B cell (primary cell): ENCODE measurements at regions of chr15 and their contacts with region 1.

Region 1: GRCh38 chr15:63466378-63467192 is 37.8 kb upstream of the USP3 start:
- DNase-seq: peak; percentile 87
- ATAC-seq: peak; percentile 95
- H3K4me3 ChIP-seq: no peak overlapping the region
- H3K4me3 Mint-ChIP-seq: no peak overlapping the region
- H3K27ac ChIP-seq: no peak overlapping the region
- H3K27ac Mint-ChIP-seq: peak overlapping the region; percentile 47
- H3K4me1 ChIP-seq: peaks cover 4 to 8% of the 10 kb centered on the region in 2 donors
- H3K4me1 Mint-ChIP-seq: peaks cover 31% of the 10 kb centered on the region
- H3K27me3 ChIP-seq: no peaks in the 10 kb centered on the region
- H3K27me3 Mint-ChIP-seq: no peaks in the 10 kb centered on the region
- CTCF ChIP-seq: peak; percentile 81

Region 2: GRCh38 chr15:63089260-63090043 is 377.1 kb before region 1 on chr15:
- CTCF ChIA-PET with region 1: no interaction called
- POLR2A ChIA-PET with region 1: no interaction called
- intact Hi-C with region 1: no loop called
- DNase-seq: no peak
- ATAC-seq: no peak
- H3K4me3 ChIP-seq: no peak overlapping the region
- H3K4me3 Mint-ChIP-seq: no peak overlapping the region
- H3K27ac ChIP-seq: no peak overlapping the region
- H3K27ac Mint-ChIP-seq: no peak overlapping the region
- H3K4me1 ChIP-seq: peaks cover 0 to 4% of the 10 kb centered on the region in 2 donors
- H3K4me1 Mint-ChIP-seq: peaks cover 2% of the 10 kb centered on the region
- H3K27me3 ChIP-seq: peaks cover 0 to 2% (median 0%) of the 10 kb centered on the region in 4 experiments
- H3K27me3 Mint-ChIP-seq: no peaks in the 10 kb centered on the region
- CTCF ChIP-seq: no peak

Region 3: GRCh38 chr15:63497642-63498467 is 31.3 kb after region 1 on chr15:
- CTCF ChIA-PET with region 1: interaction called, 148 read pairs
- POLR2A ChIA-PET with region 1: interaction called, 39 read pairs
- intact Hi-C with region 1: no loop called
- DNase-seq: peak; percentile 89
- ATAC-seq: peak; percentile 67
- H3K4me3 ChIP-seq: peak overlapping the region; percentile 6 to 48 (median 21)
- H3K4me3 Mint-ChIP-seq: no peak overlapping the region
- H3K27ac ChIP-seq: peak overlapping the region; percentile 81 to 86
- H3K27ac Mint-ChIP-seq: no peak overlapping the region
- H3K4me1 ChIP-seq: peaks cover 80% of the 10 kb centered on the region in 2 donors
- H3K4me1 Mint-ChIP-seq: peaks cover 65% of the 10 kb centered on the region
- H3K27me3 ChIP-seq: no peaks in the 10 kb centered on the region
- H3K27me3 Mint-ChIP-seq: no peaks in the 10 kb centered on the region
- CTCF ChIP-seq: no peak

Region 4: GRCh38 chr15:63539521-63539920 is 72.9 kb after region 1 on chr15:
- CTCF ChIA-PET with region 1: interaction called, 61 read pairs
- POLR2A ChIA-PET with region 1: no interaction called
- intact Hi-C with region 1: loop called (anchors 2 kb)
- DNase-seq: no peak
- ATAC-seq: no peak
- H3K4me3 ChIP-seq: no peak overlapping the region
- H3K4me3 Mint-ChIP-seq: no peak overlapping the region
- H3K27ac ChIP-seq: peak overlapping the region in 1 of 2 donors; percentile 68
- H3K27ac Mint-ChIP-seq: peak overlapping the region; percentile 48
- H3K4me1 ChIP-seq: peaks cover 41 to 58% of the 10 kb centered on the region in 2 donors
- H3K4me1 Mint-ChIP-seq: peaks cover 74% of the 10 kb centered on the region
- H3K27me3 ChIP-seq: no peaks in the 10 kb centered on the region
- H3K27me3 Mint-ChIP-seq: no peaks in the 10 kb centered on the region
- CTCF ChIP-seq: no peak

Region 5: GRCh38 chr15:63560741-63561448 is 94.3 kb after region 1 on chr15:
- CTCF ChIA-PET with region 1: interaction called, 14 read pairs
- POLR2A ChIA-PET with region 1: no interaction called
- intact Hi-C with region 1: no loop called
- DNase-seq: no peak
- ATAC-seq: no peak
- H3K4me3 ChIP-seq: no peak overlapping the region
- H3K4me3 Mint-ChIP-seq: no peak overlapping the region
- H3K27ac ChIP-seq: no peak overlapping the region
- H3K27ac Mint-ChIP-seq: peak overlapping the region; percentile 53
- H3K4me1 ChIP-seq: no peaks in the 10 kb centered on the region
- H3K4me1 Mint-ChIP-seq: peaks cover 15% of the 10 kb centered on the region
- H3K27me3 ChIP-seq: no peaks in the 10 kb centered on the region
- H3K27me3 Mint-ChIP-seq: no peaks in the 10 kb centered on the region
- CTCF ChIP-seq: no peak

Region 6: GRCh38 chr15:63600616-63601025 is 134.0 kb after region 1 on chr15:
- CTCF ChIA-PET with region 1: interaction called, 37 read pairs
- POLR2A ChIA-PET with region 1: interaction called, 5 read pairs
- intact Hi-C with region 1: loop called (anchors 1 kb)
- DNase-seq: peak; percentile 96
- ATAC-seq: peak; percentile 76
- H3K4me3 ChIP-seq: peak overlapping the region in 4 of 5 experiments; percentile 67 to 86 (median 74)
- H3K4me3 Mint-ChIP-seq: peak overlapping the region; percentile 96
- H3K27ac ChIP-seq: peak overlapping the region; percentile 65 to 76
- H3K27ac Mint-ChIP-seq: peak overlapping the region; percentile 96
- H3K4me1 ChIP-seq: peaks cover 44 to 57% of the 10 kb centered on the region in 2 donors
- H3K4me1 Mint-ChIP-seq: peaks cover 73% of the 10 kb centered on the region
- H3K27me3 ChIP-seq: no peaks in the 10 kb centered on the region
- H3K27me3 Mint-ChIP-seq: no peaks in the 10 kb centered on the region
- CTCF ChIP-seq: no peak